Activated CD4-positive, alpha-beta T cell treated with anti-CD3 and anti-CD28 coated beads, Interleukin-2, amount 10 ng/mL, durations not matched to agents 24 days and 14 days (primary cell): ENCODE measurements at regions of chr2 and their contacts with region 1.

Region 1: DNA sequence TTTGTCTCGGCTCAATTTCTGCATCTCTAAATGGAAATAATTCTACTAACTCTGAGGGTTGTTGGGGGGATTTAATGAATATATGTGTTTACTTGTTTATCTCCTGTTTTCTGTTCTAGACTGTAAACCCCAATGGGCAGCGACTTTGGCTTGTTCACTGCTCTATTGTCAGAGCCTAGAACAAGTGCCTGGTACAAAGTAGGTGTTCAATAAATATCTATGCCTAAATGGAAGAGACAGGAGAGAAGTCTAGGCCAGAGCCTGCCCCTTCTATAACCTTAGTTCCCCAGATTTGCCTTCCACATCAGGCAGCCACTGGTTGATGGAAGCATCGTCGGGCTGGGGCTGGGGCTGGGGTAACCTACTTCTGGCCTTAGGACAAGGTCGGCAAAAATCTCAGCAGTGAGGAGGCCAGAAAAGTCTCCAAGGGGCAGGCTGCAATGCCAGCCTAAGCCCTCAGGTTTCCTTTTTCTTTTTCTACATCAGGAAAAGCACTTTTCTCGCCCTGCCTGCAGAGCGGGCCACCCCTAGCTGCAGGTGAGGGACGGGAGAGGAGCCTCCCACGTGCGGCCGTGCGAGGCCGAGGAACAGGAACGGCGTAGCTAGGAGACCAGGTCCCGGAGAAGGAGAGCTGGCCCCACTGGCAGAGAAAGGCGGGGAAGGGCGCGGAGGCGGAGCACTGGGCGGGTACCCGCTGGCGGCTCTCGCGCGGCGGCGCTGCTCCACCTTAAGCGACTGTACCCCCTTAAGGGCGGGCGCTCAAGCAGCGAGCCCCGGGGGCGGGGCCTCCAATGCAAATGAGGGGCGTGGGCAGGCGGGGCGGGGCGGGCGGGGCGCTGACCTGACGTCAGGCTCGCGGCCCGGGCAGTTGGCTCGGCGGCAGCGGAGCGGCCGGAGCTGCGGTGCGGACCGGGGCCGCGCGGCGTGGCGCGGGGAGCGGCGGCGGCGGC is at the start of gene CNNM4:
- DNase-seq: peak; percentile 97
- H3K4me3 Mint-ChIP-seq: peak within 1 kb of the TSS; percentile 85
- H3K27ac Mint-ChIP-seq: peak within 1 kb of the TSS; percentile 91
- H3K4me1 Mint-ChIP-seq: peaks cover 46% of the 10 kb centered on the region
- H3K27me3 Mint-ChIP-seq: no peaks in the 10 kb centered on the region
- total RNA-seq, gene CNNM4: 10.1 and 11.2 TPM in 2 replicates

Region 2: DNA sequence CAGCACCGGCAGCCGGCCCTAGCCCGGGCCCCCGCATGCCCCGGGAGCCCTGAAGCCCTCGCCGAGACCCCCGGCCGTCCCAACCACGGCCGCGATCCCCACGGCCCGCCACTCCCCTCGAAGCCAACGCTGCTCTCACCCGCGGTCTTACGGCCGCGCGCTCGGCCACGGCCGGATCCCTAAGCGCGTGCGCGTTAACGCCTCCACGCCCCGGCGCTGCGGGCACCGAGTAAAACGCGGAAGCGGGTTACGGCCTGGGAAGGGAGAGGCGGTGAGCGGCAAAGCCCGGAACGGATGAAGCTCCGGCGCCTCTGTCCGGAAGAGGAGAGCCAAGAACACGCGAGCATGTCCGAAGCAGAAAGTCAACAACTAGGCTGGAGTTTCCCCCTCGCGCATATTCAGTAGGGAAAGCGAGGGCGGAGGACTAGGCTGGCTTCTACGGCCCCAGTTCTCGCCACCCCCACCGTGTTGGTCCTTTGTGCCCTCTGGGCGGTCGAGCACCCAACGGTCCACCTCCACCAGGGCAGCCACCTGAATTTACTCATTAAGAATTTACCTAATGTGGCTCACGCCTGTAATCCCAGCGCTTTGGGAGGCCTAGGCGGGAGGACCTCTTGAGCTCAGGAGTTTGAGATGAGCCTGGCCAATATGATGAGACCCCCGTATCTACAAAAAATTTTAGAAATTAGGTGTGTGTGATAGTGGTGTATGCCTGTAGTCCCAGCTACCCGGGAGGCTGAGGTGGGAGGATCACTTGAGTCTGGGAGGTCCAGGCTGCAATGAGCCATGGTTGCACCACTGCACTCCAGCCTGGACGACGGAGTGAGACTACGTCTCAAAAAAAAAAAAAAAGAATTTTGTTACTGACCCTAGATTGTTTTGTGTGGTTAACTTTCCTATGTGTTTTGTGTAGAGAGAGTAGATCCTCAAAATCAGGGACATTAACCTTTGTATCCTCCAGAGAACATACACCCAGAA is 121.9 kb before region 1 on chr2 and contains the start of gene KANSL3:
- intact Hi-C with region 1: loop called (anchors 1 kb)
- DNase-seq: peak; percentile 98
- H3K4me3 Mint-ChIP-seq: peak within 1 kb of the TSS; percentile 97
- H3K27ac Mint-ChIP-seq: peak within 1 kb of the TSS; percentile 97
- H3K4me1 Mint-ChIP-seq: peaks cover 24% of the 10 kb centered on the region
- H3K27me3 Mint-ChIP-seq: peaks cover 3% of the 10 kb centered on the region
- total RNA-seq, gene KANSL3: 45.5 and 46.5 TPM in 2 replicates

Region 3: GRCh38 chr2:96702098-96702785 is 58.1 kb before region 1 on chr2:
- intact Hi-C with region 1: no loop called
- DNase-seq: no peak
- H3K4me3 Mint-ChIP-seq: no peak overlapping the region
- H3K27ac Mint-ChIP-seq: no peak overlapping the region
- H3K4me1 Mint-ChIP-seq: no peaks in the 10 kb centered on the region
- H3K27me3 Mint-ChIP-seq: no peaks in the 10 kb centered on the region

Region 4: GRCh38 chr2:96739633-96740428 is 20.5 kb before region 1 on chr2 and contains the start of gene LMAN2L:
- intact Hi-C with region 1: loop called (anchors 1 kb)
- DNase-seq: peak; percentile 98
- H3K4me3 Mint-ChIP-seq: peak within 1 kb of the TSS; percentile 96
- H3K27ac Mint-ChIP-seq: peak within 1 kb of the TSS; percentile 87
- H3K4me1 Mint-ChIP-seq: peaks cover 30% of the 10 kb centered on the region
- H3K27me3 Mint-ChIP-seq: peaks cover 3% of the 10 kb centered on the region
- total RNA-seq, gene LMAN2L: 6.5 and 7.3 TPM in 2 replicates

Region 5: GRCh38 chr2:96773922-96774321 is 13.6 kb after region 1 on chr2:
- intact Hi-C with region 1: loop called (anchors 1 kb)
- DNase-seq: peak; percentile 87
- H3K4me3 Mint-ChIP-seq: peak overlapping the region; percentile 79
- H3K27ac Mint-ChIP-seq: peak overlapping the region; percentile 63
- H3K4me1 Mint-ChIP-seq: peaks cover 19% of the 10 kb centered on the region
- H3K27me3 Mint-ChIP-seq: no peaks in the 10 kb centered on the region

Region 6: DNA sequence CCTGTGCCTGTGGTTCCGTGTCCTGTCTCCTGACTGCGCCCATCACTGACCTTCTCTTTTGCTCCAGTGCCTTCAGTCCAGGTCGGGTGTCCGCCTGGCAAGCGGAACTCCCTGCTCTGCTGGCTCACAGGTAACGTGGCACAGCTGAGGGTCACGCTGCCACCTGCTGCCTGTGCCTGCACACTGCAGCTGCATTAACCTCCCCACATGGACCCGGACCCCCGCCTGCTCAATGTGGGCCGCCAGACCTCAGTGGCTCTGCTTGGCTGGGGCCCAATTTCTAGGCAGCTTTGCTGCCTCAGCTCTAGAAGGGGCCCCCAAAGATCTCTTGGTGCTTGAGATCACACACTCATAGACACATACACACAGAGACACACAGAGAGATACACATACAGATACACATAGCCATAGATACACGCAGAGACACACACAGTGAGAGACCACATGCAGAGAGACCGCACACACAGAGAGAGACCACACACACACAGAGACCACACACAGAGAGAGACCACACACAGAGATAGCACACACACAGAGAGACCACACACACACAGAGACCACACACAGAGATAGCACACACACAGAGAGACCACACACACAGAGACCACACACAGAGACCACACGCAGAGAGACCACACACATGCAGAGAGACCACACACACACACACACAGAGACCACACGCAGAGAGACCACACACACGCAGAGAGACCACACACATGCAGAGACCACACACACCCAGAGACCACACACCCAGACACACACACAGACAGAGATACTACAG is 40.9 kb after region 1 on chr2:
- intact Hi-C with region 1: loop called (anchors 2 kb)
- DNase-seq: peak; percentile 91
- H3K4me3 Mint-ChIP-seq: no peak overlapping the region
- H3K27ac Mint-ChIP-seq: no peak overlapping the region
- H3K4me1 Mint-ChIP-seq: peaks cover 1% of the 10 kb centered on the region
- H3K27me3 Mint-ChIP-seq: no peaks in the 10 kb centered on the region

Region 7: DNA sequence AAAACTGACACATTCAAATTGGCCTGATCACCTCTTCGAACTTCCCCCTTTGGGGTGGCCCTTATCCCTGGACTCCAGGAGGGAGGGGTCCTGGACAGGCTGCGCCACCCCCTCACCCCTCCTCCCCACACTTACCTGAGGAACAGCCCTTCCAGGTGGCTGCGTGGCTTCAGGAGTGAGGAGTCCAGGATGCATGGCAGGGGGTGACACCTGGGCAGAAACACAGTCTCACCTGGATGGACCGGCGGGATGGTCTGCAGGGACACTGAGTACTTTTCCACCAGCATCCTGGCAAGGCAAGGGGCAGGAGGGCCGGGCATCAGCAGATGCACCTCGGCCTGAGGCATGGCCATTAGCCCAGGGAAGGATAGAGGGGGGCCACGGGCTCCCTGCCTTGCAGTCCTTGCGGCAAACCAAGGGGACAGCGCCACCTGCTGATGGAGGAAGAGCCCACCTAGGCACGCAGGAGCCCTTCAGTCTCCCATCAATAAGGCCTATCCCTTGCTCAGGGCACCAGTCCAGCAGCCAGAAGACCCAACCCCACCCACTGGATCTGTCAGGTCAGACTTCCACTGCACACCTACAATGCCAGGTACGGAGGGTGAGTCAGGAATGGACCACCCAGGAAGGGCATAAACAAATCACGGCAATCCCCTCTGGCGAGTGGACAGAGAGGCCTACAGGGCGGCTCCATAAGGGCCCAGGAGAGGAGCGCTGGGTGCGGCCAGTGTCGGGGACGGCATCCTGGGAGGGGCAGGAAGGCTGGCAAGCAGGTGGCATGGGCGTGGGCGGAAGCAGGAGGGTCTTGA is 200.0 kb after region 1 on chr2:
- intact Hi-C with region 1: loop called (anchors 5 kb)
- DNase-seq: peak; percentile 95
- H3K4me3 Mint-ChIP-seq: peak overlapping the region; percentile 65
- H3K27ac Mint-ChIP-seq: peak overlapping the region; percentile 84
- H3K4me1 Mint-ChIP-seq: peaks cover 52% of the 10 kb centered on the region
- H3K27me3 Mint-ChIP-seq: no peaks in the 10 kb centered on the region